ENCODE measurements at regions of chr22 and their contacts with region 1.

Region 1: GRCh38 chr22:30968924-30969539 is at the start of gene TUG1:
- DNase-seq: peak; percentile 97 to 98 (median 97)
- H3K4me3 ChIP-seq: peak within 1 kb of the TSS; percentile 77
- H3K4me3 Mint-ChIP-seq: peak within 1 kb of the TSS; percentile 88 to 99 (median 95)
- H3K27ac ChIP-seq: peak within 1 kb of the TSS; percentile 74
- H3K27ac Mint-ChIP-seq: peak within 1 kb of the TSS; percentile 89 to 99 (median 96)
- H3K4me1 ChIP-seq: peaks cover 24% of the 10 kb centered on the region
- H3K4me1 Mint-ChIP-seq: peaks cover 39 to 75% (median 59%) of the 10 kb centered on the region in 3 donors
- H3K27me3 ChIP-seq: no peaks in the 10 kb centered on the region
- H3K27me3 Mint-ChIP-seq: peaks cover 0 to 3% of the 10 kb centered on the region in 2 donors
- total RNA-seq, gene TUG1: 46.6 to 49.9 TPM

Region 2: DNA sequence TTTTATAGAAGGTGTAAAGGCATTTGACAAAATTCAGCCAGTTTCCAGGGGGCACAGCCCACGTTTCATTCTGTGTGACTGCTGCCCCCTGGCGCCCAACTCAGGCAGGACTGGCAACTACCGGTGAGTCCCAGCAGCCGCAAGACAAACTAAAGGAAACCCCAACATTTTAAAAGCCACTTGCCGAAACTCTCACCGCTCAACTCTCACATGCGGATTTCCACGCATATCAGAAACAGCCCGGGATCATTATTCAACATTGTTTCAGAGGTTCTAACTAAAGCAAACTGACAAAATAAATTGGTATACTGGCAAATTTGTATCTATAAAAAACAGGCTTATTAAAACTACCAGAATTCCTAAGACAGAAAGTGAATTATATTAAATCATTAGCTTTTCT is 48.6 kb before region 1 on chr22:
- CTCF ChIA-PET with region 1: interaction called, 9 read pairs
- POLR2A ChIA-PET with region 1: interaction called, 17 read pairs
- DNase-seq: peak; percentile 66 to 87 (median 74)
- H3K4me3 ChIP-seq: peak overlapping the region; percentile 44
- H3K4me3 Mint-ChIP-seq: peak overlapping the region; percentile 12 to 76 (median 64)
- H3K27ac ChIP-seq: no peak overlapping the region
- H3K27ac Mint-ChIP-seq: peak overlapping the region in 7 of 8 donors; percentile 0 to 52 (median 10)
- H3K4me1 ChIP-seq: peaks cover 22% of the 10 kb centered on the region
- H3K4me1 Mint-ChIP-seq: peaks cover 12 to 31% (median 14%) of the 10 kb centered on the region in 3 donors
- H3K27me3 ChIP-seq: no peaks in the 10 kb centered on the region
- H3K27me3 Mint-ChIP-seq: no peaks in the 10 kb centered on the region

Region 3: GRCh38 chr22:30940685-30941362 is 28.2 kb before region 1 on chr22:
- CTCF ChIA-PET with region 1: interaction called, 9 read pairs
- POLR2A ChIA-PET with region 1: interaction called, 15 read pairs
- DNase-seq: peak in 4 of 5 donors; percentile 16 to 62 (median 49)
- H3K4me3 ChIP-seq: peak overlapping the region; percentile 63
- H3K4me3 Mint-ChIP-seq: peak overlapping the region; percentile 78 to 92 (median 87)
- H3K27ac ChIP-seq: peak overlapping the region; percentile 17
- H3K27ac Mint-ChIP-seq: peak overlapping the region; percentile 83 to 96 (median 92)
- H3K4me1 ChIP-seq: peaks cover 92% of the 10 kb centered on the region
- H3K4me1 Mint-ChIP-seq: peaks cover 67 to 83% (median 77%) of the 10 kb centered on the region in 3 donors
- H3K27me3 ChIP-seq: no peaks in the 10 kb centered on the region
- H3K27me3 Mint-ChIP-seq: no peaks in the 10 kb centered on the region

Region 4: DNA sequence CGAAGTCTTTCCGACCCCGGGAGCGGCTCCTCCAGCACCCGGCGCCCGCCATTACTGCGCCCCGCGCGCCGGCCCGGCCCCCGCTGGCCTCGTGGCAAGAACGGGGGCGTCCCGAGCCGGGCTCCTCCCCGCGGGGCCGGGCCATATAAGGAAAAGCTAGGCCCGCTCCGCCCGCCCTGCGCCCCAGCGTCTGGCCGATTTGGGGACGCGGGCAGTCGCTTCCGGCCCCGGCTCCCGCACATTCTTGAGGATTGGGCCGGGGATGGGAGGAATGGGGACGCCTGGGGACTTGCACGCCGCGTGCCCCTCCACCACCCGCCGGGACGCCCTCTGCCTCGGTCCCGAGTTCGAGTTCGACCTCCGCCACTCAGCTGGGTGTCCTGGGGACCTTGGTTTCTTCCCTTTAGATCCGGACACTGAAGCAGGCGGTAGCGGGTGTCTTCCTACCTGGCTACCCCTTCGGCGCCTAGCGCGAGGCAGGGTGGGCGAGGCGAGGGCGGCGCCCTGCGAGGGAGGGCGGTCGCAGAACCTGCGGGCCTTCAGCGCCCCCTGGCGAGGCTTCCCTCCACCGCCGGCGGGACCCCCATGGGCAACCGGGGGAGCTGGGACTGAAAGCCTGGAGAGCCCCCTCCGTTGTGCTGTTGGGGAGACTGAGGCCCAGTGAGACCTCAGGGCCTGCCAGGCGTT is 115.9 kb after region 1 on chr22:
- CTCF ChIA-PET with region 1: interaction called, 6 read pairs
- POLR2A ChIA-PET with region 1: interaction called, 11 read pairs
- DNase-seq: peak; percentile 81 to 89 (median 84)
- H3K4me3 ChIP-seq: peak overlapping the region; percentile 69
- H3K4me3 Mint-ChIP-seq: peak overlapping the region; percentile 83 to 92 (median 86)
- H3K27ac ChIP-seq: peak overlapping the region; percentile 68
- H3K27ac Mint-ChIP-seq: peak overlapping the region; percentile 45 to 90 (median 78)
- H3K4me1 ChIP-seq: peaks cover 38% of the 10 kb centered on the region
- H3K4me1 Mint-ChIP-seq: peaks cover 29 to 42% (median 31%) of the 10 kb centered on the region in 3 donors
- H3K27me3 ChIP-seq: no peaks in the 10 kb centered on the region
- H3K27me3 Mint-ChIP-seq: no peaks in the 10 kb centered on the region

Measured in CD8-positive, alpha-beta memory T cell (primary cell).